ENCODE measurements at regions of chr1 and their contacts with region 1.

Region 1: GRCh38 chr1:24391882-24392603 is 21.5 kb downstream of the STPG1 start:
- DNase-seq: peak; percentile 65
- ATAC-seq: peak; percentile 71
- H3K4me3 Mint-ChIP-seq: peak overlapping the region; percentile 67
- H3K27ac Mint-ChIP-seq: peak overlapping the region; percentile 87
- H3K4me1 Mint-ChIP-seq: peaks cover 26% of the 10 kb centered on the region
- H3K27me3 Mint-ChIP-seq: no peaks in the 10 kb centered on the region

Region 2: GRCh38 chr1:24186993-24187805 is 204.8 kb before region 1 on chr1 and contains the start of gene IFNLR1:
- CTCF ChIA-PET with region 1: interaction called, 100 read pairs
- POLR2A ChIA-PET with region 1: interaction called, 5 read pairs
- DNase-seq: peak; percentile 75
- ATAC-seq: peak; percentile 89
- H3K4me3 Mint-ChIP-seq: peak within 1 kb of the TSS; percentile 76
- H3K27ac Mint-ChIP-seq: peak within 1 kb of the TSS; percentile 61
- H3K4me1 Mint-ChIP-seq: peaks cover 50% of the 10 kb centered on the region
- H3K27me3 Mint-ChIP-seq: no peaks in the 10 kb centered on the region
- total RNA-seq, gene IFNLR1: 2.6 to 4.0 TPM

Region 3: GRCh38 chr1:24321697-24322469 is 70.2 kb before region 1 on chr1:
- CTCF ChIA-PET with region 1: interaction called, 41 read pairs
- POLR2A ChIA-PET with region 1: no interaction called
- DNase-seq: peak; percentile 79
- ATAC-seq: peak; percentile 81
- H3K4me3 Mint-ChIP-seq: peak overlapping the region; percentile 62
- H3K27ac Mint-ChIP-seq: peak overlapping the region; percentile 68
- H3K4me1 Mint-ChIP-seq: peaks cover 42% of the 10 kb centered on the region
- H3K27me3 Mint-ChIP-seq: peaks cover 88% of the 10 kb centered on the region

Region 4: GRCh38 chr1:24379733-24380315 is 12.2 kb before region 1 on chr1:
- CTCF ChIA-PET with region 1: interaction called, 47 read pairs
- POLR2A ChIA-PET with region 1: no interaction called
- DNase-seq: no peak
- ATAC-seq: no peak
- H3K4me3 Mint-ChIP-seq: no peak overlapping the region
- H3K27ac Mint-ChIP-seq: no peak overlapping the region
- H3K4me1 Mint-ChIP-seq: peaks cover 9% of the 10 kb centered on the region
- H3K27me3 Mint-ChIP-seq: no peaks in the 10 kb centered on the region

Region 5: GRCh38 chr1:24586970-24587820 is 195.2 kb after region 1 on chr1:
- CTCF ChIA-PET with region 1: interaction called, 63 read pairs
- POLR2A ChIA-PET with region 1: no interaction called
- DNase-seq: peak; percentile 75
- ATAC-seq: peak; percentile 97
- H3K4me3 Mint-ChIP-seq: no peak overlapping the region
- H3K27ac Mint-ChIP-seq: no peak overlapping the region
- H3K4me1 Mint-ChIP-seq: peaks cover 13% of the 10 kb centered on the region
- H3K27me3 Mint-ChIP-seq: peaks cover 14% of the 10 kb centered on the region